ENCODE measurements at regions of chr19 and their contacts with region 1.

Region 1: GRCh38 chr19:19224852-19225494 is 13.2 kb downstream of the NCAN start:
- DNase-seq: peak; percentile 78
- ATAC-seq: peak; percentile 89
- H3K4me3 ChIP-seq: peak overlapping the region in 2 of 3 experiments; percentile 45 to 64; a peak in 4 of 6 replicates
- H3K27ac ChIP-seq: no peak overlapping the region
- H3K4me1 ChIP-seq: peaks cover 32% of the 10 kb centered on the region
- H3K27me3 ChIP-seq: peaks cover 6 to 44% of the 10 kb centered on the region in 2 experiments
- CTCF ChIP-seq: peak; percentile 93
- EP300 ChIP-seq: no peak
- POLR2A ChIP-seq: 0 out of 4 replicates have a peak, but pooled peaks of 1 of the 2 experiments have one; percentile 30
- RAD21 ChIP-seq: peak; percentile 83

Region 2: DNA sequence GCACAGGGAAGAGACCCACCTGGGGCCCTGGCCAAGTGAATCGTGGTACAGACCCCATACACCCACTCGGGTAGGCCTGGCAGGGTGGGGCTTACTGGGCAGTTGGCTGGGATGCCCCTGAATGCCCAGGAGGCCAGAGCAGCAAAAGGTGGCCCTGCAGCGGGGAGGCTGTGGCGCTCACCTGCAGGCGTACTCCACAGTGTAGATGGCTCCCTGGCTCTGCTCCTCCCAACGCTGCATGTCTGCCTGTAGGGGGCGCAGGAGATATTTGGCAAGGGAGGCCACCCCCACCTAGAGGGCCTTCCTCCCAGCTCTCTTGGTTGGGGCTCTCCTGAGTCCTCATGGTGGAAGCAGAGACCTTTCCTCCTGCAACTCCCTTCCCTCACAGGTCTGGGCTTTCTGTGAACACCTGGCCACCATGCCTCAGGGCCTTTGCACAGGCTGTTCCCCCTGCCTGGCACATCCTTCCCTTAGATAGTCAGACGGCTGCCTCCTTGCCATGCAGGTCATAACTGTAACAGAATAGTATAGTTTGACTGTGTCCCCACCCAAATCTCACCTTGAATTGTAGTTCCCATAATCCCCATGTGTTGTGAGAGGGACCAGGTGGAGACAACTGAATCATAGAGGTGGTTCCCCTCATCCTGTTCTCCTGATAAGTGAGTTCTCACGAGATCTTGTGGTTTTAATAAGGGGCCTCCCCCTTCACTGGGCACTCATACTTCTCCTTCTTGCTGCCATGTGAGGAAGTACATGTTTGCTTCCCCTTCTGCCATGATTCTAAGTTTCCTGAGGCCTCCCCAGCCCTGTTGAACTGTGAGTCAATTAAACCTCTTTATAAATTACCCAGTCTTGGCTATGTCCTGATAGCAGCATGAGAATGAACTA is 38.9 kb before region 1 on chr19:
- CTCF ChIA-PET with region 1: interaction called, 16 read pairs
- POLR2A ChIA-PET with region 1: no interaction called
- in situ Hi-C with region 1: no loop called
- intact Hi-C with region 1: loop called (anchors 1 kb)
- DNase-seq: peak; percentile 68
- ATAC-seq: peak; percentile 98
- H3K4me3 ChIP-seq: no peak overlapping the region
- H3K27ac ChIP-seq: no peak overlapping the region
- H3K4me1 ChIP-seq: peaks cover 14% of the 10 kb centered on the region
- H3K27me3 ChIP-seq: no peaks in the 10 kb centered on the region
- CTCF ChIP-seq: peak; percentile 93
- EP300 ChIP-seq: no peak
- POLR2A ChIP-seq: no peak
- RAD21 ChIP-seq: peak; percentile 79

Region 3: DNA sequence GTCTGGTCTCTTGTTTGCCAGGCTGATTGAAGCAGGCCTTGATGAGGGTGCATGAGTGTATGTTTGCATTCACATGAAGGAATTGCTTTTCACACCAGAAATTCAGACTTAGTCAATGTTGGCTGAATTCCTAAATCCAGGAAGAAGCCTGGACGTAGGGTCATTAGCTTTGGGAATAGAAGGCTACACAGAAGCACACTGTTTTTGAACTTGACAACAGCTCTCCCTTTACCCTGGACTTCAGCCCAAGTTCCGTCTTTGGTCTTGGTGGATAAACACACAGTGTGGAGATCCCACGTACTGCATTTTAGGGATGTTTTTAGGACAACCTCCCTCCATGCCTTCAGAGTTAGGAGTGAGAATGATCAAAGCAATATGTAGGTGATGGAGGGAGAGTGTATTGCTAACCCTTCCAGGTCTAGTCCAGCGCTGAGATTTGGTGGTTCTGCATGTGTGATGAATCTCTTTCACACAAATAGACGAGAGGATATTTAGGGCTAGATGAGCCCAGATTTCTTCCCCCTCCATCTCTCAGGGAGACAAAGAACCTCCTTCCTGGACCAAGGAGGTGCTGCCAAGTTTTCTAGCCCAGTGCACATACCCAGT is 25.3 kb after region 1 on chr19:
- CTCF ChIA-PET with region 1: no interaction called
- POLR2A ChIA-PET with region 1: no interaction called
- in situ Hi-C with region 1: no loop called
- intact Hi-C with region 1: no loop called
- DNase-seq: peak; percentile 23
- ATAC-seq: peak; percentile 68
- H3K4me3 ChIP-seq: no peak overlapping the region
- H3K27ac ChIP-seq: no peak overlapping the region
- H3K4me1 ChIP-seq: peaks cover 15% of the 10 kb centered on the region
- H3K27me3 ChIP-seq: peaks cover 0 to 10% of the 10 kb centered on the region in 2 experiments; a peak in 2 of 5 replicates
- CTCF ChIP-seq: no peak
- EP300 ChIP-seq: no peak
- POLR2A ChIP-seq: no peak
- RAD21 ChIP-seq: no peak

Region 4: GRCh38 chr19:19749117-19749897 is 524.3 kb after region 1 on chr19:
- CTCF ChIA-PET with region 1: no interaction called
- POLR2A ChIA-PET with region 1: no interaction called
- in situ Hi-C with region 1: no loop called
- intact Hi-C with region 1: no loop called
- DNase-seq: no peak
- ATAC-seq: no peak
- H3K4me3 ChIP-seq: no peak overlapping the region
- H3K27ac ChIP-seq: no peak overlapping the region
- H3K4me1 ChIP-seq: no peaks in the 10 kb centered on the region
- H3K27me3 ChIP-seq: peaks cover 6 to 34% of the 10 kb centered on the region in 2 experiments; a peak in 4 of 5 replicates
- CTCF ChIP-seq: no peak
- EP300 ChIP-seq: no peak
- POLR2A ChIP-seq: no peak
- RAD21 ChIP-seq: no peak

Measured in HepG2 (cell line).